ENCODE measurements at regions of chr18 and their contacts with region 1.

Region 1: GRCh38 chr18:34322365-34323289 is 97.9 kb upstream of the NOL4 start:
- DNase-seq: peak; percentile 36
- H3K4me3 ChIP-seq: no peak overlapping the region; a peak in 1 of 4 replicates
- H3K27ac ChIP-seq: no peak overlapping the region
- H3K4me1 ChIP-seq: peaks cover 0 to 3% of the 10 kb centered on the region in 2 experiments; a peak in 2 of 4 replicates
- H3K27me3 ChIP-seq: no peaks in the 10 kb centered on the region
- CTCF ChIP-seq: peak; percentile 91
- EP300 ChIP-seq: no peak
- RAD21 ChIP-seq: peak; percentile 96

Region 2: DNA sequence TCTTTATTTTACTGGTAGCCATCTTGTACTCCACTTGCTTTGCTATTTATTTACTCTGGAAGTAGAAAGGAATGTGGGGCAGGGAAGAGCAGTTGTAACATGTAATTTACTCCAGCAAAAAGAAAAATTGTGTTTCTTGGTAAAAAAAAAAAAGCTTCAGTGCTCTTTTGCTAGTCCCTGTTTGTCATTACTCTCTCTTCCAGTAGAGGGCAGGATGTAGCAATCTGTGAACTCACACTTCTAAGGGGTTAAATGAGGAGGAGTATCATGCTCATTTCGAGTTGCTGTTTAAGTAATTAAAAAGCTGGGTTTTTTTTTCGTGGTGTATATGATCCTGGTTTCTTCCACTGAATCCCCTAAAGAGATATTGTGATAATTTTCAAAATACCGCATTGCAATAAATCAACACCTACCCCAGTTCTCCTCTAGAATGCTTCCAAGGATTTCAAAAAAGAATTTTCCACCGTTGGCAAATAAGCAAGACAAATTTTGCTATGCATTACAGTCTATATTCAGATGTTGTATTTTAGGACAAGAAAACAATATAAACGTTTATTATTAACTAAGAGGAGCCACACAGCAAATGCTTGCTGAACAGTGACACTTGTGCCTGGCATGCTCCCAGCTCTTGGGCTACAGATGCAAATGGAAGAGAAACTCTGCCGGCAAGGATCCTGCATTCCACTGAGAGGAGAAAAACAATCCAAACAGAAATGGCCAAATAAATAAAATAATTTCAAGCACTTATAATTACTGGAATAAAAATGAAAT is 483.0 kb before region 1 on chr18:
- CTCF ChIA-PET with region 1: interaction called, 28 read pairs
- POLR2A ChIA-PET with region 1: no interaction called
- DNase-seq: peak; percentile 46
- H3K4me3 ChIP-seq: no peak overlapping the region; a peak in 1 of 4 replicates
- H3K27ac ChIP-seq: no peak overlapping the region
- H3K4me1 ChIP-seq: no peaks in the 10 kb centered on the region; a peak in 1 of 4 replicates
- H3K27me3 ChIP-seq: no peaks in the 10 kb centered on the region
- CTCF ChIP-seq: peak; percentile 83
- EP300 ChIP-seq: no peak
- RAD21 ChIP-seq: peak; percentile 81

Region 3: DNA sequence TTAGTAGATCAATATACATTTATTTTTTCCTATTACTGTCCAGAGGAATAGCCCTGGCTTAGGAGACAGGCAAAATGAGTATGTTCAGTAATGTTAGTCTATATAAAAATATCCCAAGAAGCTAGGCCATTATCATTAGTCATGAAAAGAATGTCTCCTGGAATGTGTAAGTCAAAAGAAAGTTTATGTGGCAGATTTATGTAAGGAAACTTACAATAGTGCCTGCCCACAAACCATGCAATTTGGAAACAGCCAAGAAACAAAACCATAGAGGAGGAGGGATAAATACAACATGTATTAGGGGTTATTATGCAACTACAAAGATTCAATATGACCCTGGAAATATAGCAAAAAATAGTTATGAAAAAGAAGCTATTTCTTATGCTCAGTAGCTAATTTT is 194.2 kb before region 1 on chr18:
- CTCF ChIA-PET with region 1: interaction called, 161 read pairs
- POLR2A ChIA-PET with region 1: interaction called, 4 read pairs
- DNase-seq: no peak
- H3K4me3 ChIP-seq: no peak overlapping the region
- H3K27ac ChIP-seq: no peak overlapping the region
- H3K4me1 ChIP-seq: no peaks in the 10 kb centered on the region
- H3K27me3 ChIP-seq: no peaks in the 10 kb centered on the region
- CTCF ChIP-seq: no peak
- EP300 ChIP-seq: no peak
- RAD21 ChIP-seq: no peak

Region 4: DNA sequence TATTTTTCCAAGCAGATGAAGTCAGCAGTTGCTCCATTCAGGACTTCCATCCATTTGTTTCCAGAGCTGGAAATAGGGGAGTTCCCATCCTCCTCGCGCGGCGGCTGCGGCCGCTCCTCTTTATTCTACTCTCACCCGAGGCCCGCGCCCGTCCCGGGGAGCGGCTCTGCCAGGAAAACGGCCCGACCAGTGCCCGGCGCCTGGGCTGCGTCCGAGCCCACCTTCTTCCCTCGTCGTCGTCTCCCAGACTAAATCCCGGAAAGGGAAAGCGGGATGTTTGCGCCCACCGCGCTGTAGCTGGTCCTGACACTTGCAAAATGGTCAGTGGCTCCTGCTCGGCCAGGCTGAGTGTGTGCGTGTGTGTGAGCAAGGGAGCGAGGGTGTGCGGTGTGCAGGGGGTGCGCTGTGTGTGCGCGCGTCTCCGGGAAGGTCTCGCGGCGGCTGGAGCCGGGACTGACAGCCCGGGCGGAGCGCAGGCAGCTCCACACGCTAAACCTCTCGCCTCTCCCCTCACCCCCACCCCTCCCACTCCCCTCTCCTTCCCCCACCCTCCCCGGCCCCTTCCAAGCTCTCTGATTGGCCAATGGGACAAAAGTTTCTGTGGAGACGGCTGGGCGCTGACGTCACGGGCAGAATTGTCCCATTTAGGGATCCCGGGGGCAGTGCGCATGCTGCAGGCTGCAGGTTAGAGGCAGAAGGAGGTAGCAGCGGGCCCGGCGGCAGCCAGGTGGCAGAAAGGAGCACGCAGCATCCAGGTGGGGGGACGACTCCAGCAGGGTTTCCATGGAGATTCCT is 98.0 kb before region 1 on chr18 and contains the start of gene NOL4:
- CTCF ChIA-PET with region 1: interaction called, 28 read pairs
- POLR2A ChIA-PET with region 1: interaction called, 4 read pairs
- DNase-seq: peak; percentile 89
- H3K4me3 ChIP-seq: peak within 1 kb of the TSS; percentile 58 to 63
- H3K27ac ChIP-seq: peak within 1 kb of the TSS in 1 of 2 experiments; percentile 97; a peak in 2 of 4 replicates
- H3K4me1 ChIP-seq: peaks cover 0 to 3% of the 10 kb centered on the region in 2 experiments; a peak in 1 of 4 replicates
- H3K27me3 ChIP-seq: peaks cover 37% of the 10 kb centered on the region
- CTCF ChIP-seq: no peak
- EP300 ChIP-seq: no peak
- RAD21 ChIP-seq: peak; percentile 46; the same call in 1 of the 2 replicates
- polyA plus RNA-seq, gene NOL4: 0.07 and 0.49 TPM in 2 replicates

Region 5: DNA sequence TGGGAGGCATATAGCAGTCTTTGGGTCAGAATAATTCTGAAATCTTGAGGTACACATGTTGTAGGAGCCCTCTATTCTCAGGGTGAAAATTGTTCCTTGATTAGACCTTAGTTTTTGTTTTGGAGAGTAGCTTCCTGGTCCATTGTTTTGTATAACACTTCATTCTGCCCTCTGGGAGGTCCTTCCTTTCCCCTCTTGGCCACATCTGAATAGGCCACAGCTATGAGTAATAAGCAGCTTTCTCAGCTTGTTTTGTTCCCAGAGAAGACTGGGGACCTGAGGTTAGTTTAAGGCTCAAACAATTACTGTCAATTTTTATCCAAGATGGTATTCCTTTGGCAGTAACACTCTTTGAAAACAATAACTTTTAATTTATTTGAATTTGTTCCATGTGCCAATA is 25.3 kb before region 1 on chr18:
- CTCF ChIA-PET with region 1: interaction called, 11 read pairs
- POLR2A ChIA-PET with region 1: no interaction called
- DNase-seq: no peak
- H3K4me3 ChIP-seq: no peak overlapping the region
- H3K27ac ChIP-seq: no peak overlapping the region
- H3K4me1 ChIP-seq: no peaks in the 10 kb centered on the region; a peak in 2 of 4 replicates
- H3K27me3 ChIP-seq: no peaks in the 10 kb centered on the region
- CTCF ChIP-seq: no peak
- EP300 ChIP-seq: no peak
- RAD21 ChIP-seq: no peak

Measured in SK-N-SH (cell line).